Heart left ventricle (tissue), 16 donors: ENCODE measurements at regions of chr3 and their contacts with region 1.

Region 1: GRCh38 chr3:40971191-40972168 is 227.8 kb upstream of the CTNNB1 start:
- DNase-seq: peak; percentile 64 to 85 (median 76)
- ATAC-seq: peak; percentile 80 to 96 (median 94)
- H3K4me3 ChIP-seq: no peak overlapping the region
- H3K27ac ChIP-seq: peak overlapping the region; percentile 35 to 88 (median 72)
- H3K4me1 ChIP-seq: peaks cover 8 to 63% (median 54%) of the 10 kb centered on the region in 12 donors
- H3K27me3 ChIP-seq: no peaks in the 10 kb centered on the region
- CTCF ChIP-seq: peak in 1 of 12 donors; percentile 13
- POLR2A ChIP-seq: no peak

Region 2: GRCh38 chr3:40417845-40418543 is 553.5 kb before region 1 on chr3:
- intact Hi-C with region 1: no loop called
- DNase-seq: no peak
- ATAC-seq: no peak
- H3K4me3 ChIP-seq: no peak overlapping the region
- H3K27ac ChIP-seq: no peak overlapping the region
- H3K4me1 ChIP-seq: peaks cover 0 to 20% (median 0%) of the 10 kb centered on the region in 12 donors
- H3K27me3 ChIP-seq: no peaks in the 10 kb centered on the region
- CTCF ChIP-seq: no peak
- POLR2A ChIP-seq: no peak

Region 3: DNA sequence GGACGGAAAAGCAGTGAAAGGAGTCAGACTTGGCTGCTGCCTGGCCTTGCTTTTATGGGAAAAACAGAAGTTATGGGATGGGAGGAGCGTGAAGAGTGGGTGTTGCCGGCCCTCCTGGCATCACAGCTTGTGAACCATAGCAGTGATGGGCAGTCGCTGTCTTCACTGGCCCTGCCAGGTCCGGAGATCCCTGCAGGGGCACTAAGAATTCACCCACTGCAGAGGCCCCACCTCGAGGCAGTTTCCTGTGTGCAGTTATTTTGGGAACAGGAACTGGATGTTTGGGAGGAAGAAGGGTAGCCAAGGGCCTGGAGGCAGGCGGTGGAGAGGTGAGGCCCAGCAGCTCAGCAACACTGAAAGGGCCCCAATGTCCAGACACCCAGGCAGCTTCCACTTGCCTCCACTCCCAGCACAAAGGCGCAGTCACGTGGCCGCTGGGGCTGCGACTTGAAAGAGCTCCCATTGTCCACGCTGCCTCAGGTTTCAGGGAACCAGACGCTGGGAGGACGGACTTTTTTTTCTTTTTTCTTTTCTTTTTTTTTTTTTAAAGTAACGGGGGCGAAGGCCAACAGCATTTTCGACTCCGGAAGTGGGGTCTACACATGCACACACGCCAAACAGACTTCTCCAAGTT is 191.1 kb before region 1 on chr3:
- intact Hi-C with region 1: loop called in 4 of 10 experiments (anchors 5 to 10 kb)
- DNase-seq: peak; percentile 81 to 90 (median 86)
- ATAC-seq: peak; percentile 82 to 90 (median 84)
- H3K4me3 ChIP-seq: peak overlapping the region in 9 of 12 donors; percentile 2 to 41 (median 29)
- H3K27ac ChIP-seq: peak overlapping the region; percentile 70 to 93 (median 80)
- H3K4me1 ChIP-seq: peaks cover 0 to 32% (median 26%) of the 10 kb centered on the region in 12 donors
- H3K27me3 ChIP-seq: no peaks in the 10 kb centered on the region
- CTCF ChIP-seq: peak in 4 of 12 donors; percentile 13 to 20 (median 16)
- POLR2A ChIP-seq: no peak

Region 4: DNA sequence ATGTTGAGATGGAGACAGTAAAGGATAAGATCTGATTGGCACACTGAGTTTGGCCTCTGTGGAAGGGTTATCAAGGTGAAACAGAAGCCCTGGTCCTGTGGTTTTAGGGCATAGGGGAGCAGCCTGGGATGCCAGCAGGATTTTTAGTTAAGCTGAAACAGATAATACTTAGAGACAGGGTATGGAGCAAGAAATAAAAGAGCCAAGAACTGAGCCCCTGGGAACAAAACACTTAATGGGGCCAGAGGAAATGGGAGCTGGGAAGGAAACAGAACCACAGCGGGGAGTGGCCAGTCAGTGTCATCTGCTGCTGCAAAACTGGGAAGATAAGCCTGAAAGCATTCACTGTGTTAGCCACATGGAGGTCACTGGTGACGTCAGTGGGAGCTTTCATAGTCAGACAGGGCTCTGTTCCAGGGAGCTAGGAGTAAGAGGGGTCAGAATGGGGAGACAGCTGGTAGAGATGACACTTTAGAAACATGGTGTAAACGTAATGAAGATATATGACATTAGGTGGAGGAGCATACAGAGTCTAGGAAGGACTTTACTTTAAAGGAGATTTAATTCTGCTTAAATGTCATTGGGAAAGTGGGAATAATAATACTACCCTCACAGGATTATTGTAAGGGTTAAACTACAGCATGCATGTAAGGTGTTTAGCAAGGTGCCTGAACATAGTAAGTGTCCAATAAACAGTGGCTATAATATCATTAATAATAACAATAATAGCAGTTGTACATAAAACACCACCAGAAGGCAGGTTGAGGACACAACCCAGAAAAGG is 55.1 kb after region 1 on chr3:
- intact Hi-C with region 1: no loop called
- DNase-seq: peak in 4 of 5 donors; percentile 81 to 88 (median 84)
- ATAC-seq: peak; percentile 86 to 98 (median 96)
- H3K4me3 ChIP-seq: no peak overlapping the region
- H3K27ac ChIP-seq: peak overlapping the region in 7 of 12 donors; percentile 14 to 67 (median 36)
- H3K4me1 ChIP-seq: peaks cover 0 to 18% (median 11%) of the 10 kb centered on the region in 12 donors
- H3K27me3 ChIP-seq: no peaks in the 10 kb centered on the region
- CTCF ChIP-seq: no peak
- POLR2A ChIP-seq: no peak

Region 5: GRCh38 chr3:41117398-41117870 is 146.0 kb after region 1 on chr3:
- intact Hi-C with region 1: loop called in 1 of 10 experiments (anchors 5 kb)
- DNase-seq: peak; percentile 90 to 95 (median 95)
- ATAC-seq: peak; percentile 87 to 97 (median 95)
- H3K4me3 ChIP-seq: peak overlapping the region in 1 of 12 donors; percentile 5
- H3K27ac ChIP-seq: peak overlapping the region in 10 of 12 donors; percentile 2 to 79 (median 46)
- H3K4me1 ChIP-seq: peaks cover 5 to 36% (median 22%) of the 10 kb centered on the region in 12 donors
- H3K27me3 ChIP-seq: no peaks in the 10 kb centered on the region
- CTCF ChIP-seq: peak in 1 of 12 donors; percentile 2
- POLR2A ChIP-seq: no peak